ENCODE measurements at regions of chr11 and their contacts with region 1.

Region 1: DNA sequence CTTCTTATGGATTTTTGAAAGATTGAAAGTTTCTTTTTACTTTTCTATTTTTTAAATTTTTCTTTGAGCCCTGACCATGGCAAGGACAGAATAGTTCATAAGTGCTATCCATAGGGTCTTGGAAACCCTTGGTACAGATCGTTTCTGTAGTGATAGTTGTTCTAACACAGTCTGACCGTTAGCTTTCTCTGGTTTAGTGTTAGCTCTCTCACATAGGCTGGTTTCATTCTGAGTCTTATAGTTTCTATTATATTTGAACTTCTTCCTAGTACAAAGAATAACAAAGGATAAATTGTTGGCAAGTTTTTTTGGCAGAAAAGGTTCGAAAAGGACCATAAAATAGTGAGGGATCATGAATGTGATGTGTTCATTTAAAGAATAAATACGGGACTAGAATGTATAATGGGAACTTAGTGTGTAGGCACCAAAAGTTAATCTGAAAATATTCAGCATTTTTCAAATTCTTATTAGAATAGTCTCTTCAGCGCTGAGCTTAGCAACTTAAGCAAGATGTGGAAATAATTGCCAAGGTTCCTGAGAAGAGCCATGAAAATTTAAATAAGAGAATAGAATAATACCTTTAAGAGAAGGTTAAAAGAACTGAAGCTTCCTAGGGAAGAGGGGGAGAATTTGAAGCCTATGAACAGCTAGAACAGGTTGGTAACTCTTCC is 24.1 kb downstream of the FDX1 start:
- DNase-seq: no peak
- ATAC-seq: no peak
- H3K4me3 ChIP-seq: no peak overlapping the region
- H3K4me3 Mint-ChIP-seq: no peak overlapping the region
- H3K27ac ChIP-seq: no peak overlapping the region
- H3K27ac Mint-ChIP-seq: no peak overlapping the region
- H3K4me1 ChIP-seq: no peaks in the 10 kb centered on the region
- H3K4me1 Mint-ChIP-seq: peaks cover 40% of the 10 kb centered on the region
- H3K27me3 ChIP-seq: no peaks in the 10 kb centered on the region
- H3K27me3 Mint-ChIP-seq: no peaks in the 10 kb centered on the region
- CTCF ChIP-seq: no peak

Region 2: GRCh38 chr11:110173811-110174644 is 279.8 kb before region 1 on chr11:
- CTCF ChIA-PET with region 1: no interaction called
- POLR2A ChIA-PET with region 1: no interaction called
- intact Hi-C with region 1: no loop called
- DNase-seq: peak; percentile 14 to 69 (median 57)
- ATAC-seq: peak; percentile 87
- H3K4me3 ChIP-seq: no peak overlapping the region
- H3K4me3 Mint-ChIP-seq: peak overlapping the region; percentile 70
- H3K27ac ChIP-seq: no peak overlapping the region
- H3K27ac Mint-ChIP-seq: no peak overlapping the region
- H3K4me1 ChIP-seq: peaks cover 7% of the 10 kb centered on the region
- H3K4me1 Mint-ChIP-seq: peaks cover 7% of the 10 kb centered on the region
- H3K27me3 ChIP-seq: no peaks in the 10 kb centered on the region
- H3K27me3 Mint-ChIP-seq: peaks cover 17% of the 10 kb centered on the region
- CTCF ChIP-seq: peak; percentile 75

Region 3: DNA sequence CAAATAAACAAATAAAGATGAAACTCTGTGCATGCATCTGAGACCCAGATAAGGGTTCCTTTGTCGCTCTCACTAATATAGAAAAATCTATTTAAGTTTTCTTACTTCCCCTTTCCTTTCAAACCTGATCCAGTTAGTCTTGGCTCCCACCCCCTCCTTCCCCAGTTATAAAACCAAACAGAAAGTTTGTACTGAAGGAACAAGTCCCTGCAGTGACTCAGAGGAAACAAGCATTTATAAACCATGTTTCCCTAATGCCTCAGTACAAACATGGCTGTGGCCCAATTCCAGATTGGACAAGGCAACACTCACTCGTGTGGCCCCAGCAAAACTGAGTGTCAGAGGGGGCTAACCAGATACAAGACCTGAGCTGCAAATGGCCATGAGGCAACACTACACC is 324.0 kb after region 1 on chr11:
- CTCF ChIA-PET with region 1: no interaction called
- POLR2A ChIA-PET with region 1: no interaction called
- intact Hi-C with region 1: loop called in 1 of 2 experiments (anchors 10 kb)
- DNase-seq: no peak
- ATAC-seq: no peak
- H3K4me3 ChIP-seq: no peak overlapping the region
- H3K4me3 Mint-ChIP-seq: no peak overlapping the region
- H3K27ac ChIP-seq: no peak overlapping the region
- H3K27ac Mint-ChIP-seq: no peak overlapping the region
- H3K4me1 ChIP-seq: no peaks in the 10 kb centered on the region
- H3K4me1 Mint-ChIP-seq: no peaks in the 10 kb centered on the region
- H3K27me3 ChIP-seq: no peaks in the 10 kb centered on the region
- H3K27me3 Mint-ChIP-seq: no peaks in the 10 kb centered on the region
- CTCF ChIP-seq: no peak

Region 4: GRCh38 chr11:110907629-110908028 is 453.8 kb after region 1 on chr11:
- CTCF ChIA-PET with region 1: no interaction called
- POLR2A ChIA-PET with region 1: no interaction called
- intact Hi-C with region 1: no loop called
- DNase-seq: peak in 2 of 9 experiments; percentile 7 to 36
- ATAC-seq: peak; percentile 36
- H3K4me3 ChIP-seq: no peak overlapping the region
- H3K4me3 Mint-ChIP-seq: peak overlapping the region; percentile 7
- H3K27ac ChIP-seq: no peak overlapping the region
- H3K27ac Mint-ChIP-seq: peak overlapping the region; percentile 79
- H3K4me1 ChIP-seq: peaks cover 21% of the 10 kb centered on the region
- H3K4me1 Mint-ChIP-seq: peaks cover 21% of the 10 kb centered on the region
- H3K27me3 ChIP-seq: no peaks in the 10 kb centered on the region
- H3K27me3 Mint-ChIP-seq: no peaks in the 10 kb centered on the region
- CTCF ChIP-seq: no peak